Natural killer cell (primary cell): ENCODE measurements at regions of chrX and their contacts with region 1.

Region 1: GRCh38 chrX:48957827-48958634 is 624 bp upstream of the OTUD5 start:
- DNase-seq: peak; percentile 88 to 97
- ATAC-seq: peak; percentile 75 to 88 (median 79)
- H3K4me3 ChIP-seq: peak overlapping the region; percentile 57
- H3K4me3 Mint-ChIP-seq: peak overlapping the region; percentile 96
- H3K27ac ChIP-seq: peak overlapping the region; percentile 98
- H3K27ac Mint-ChIP-seq: peak overlapping the region; percentile 100
- H3K4me1 ChIP-seq: peaks cover 42% of the 10 kb centered on the region
- H3K4me1 Mint-ChIP-seq: peaks cover 24 to 45% of the 10 kb centered on the region in 2 donors
- H3K27me3 ChIP-seq: no peaks in the 10 kb centered on the region
- H3K27me3 Mint-ChIP-seq: peaks cover 0 to 7% of the 10 kb centered on the region in 2 donors
- CTCF ChIP-seq: no peak

Region 2: GRCh38 chrX:47658684-47659515 is 1299.1 kb before region 1 on chrX and contains the start of gene UXT:
- intact Hi-C with region 1: loop called (anchors 5 kb)
- DNase-seq: peak; percentile 85 to 94
- ATAC-seq: peak; percentile 81 to 92 (median 82)
- H3K4me3 ChIP-seq: peak within 1 kb of the TSS; percentile 89
- H3K4me3 Mint-ChIP-seq: peak within 1 kb of the TSS; percentile 83
- H3K27ac ChIP-seq: peak within 1 kb of the TSS; percentile 99
- H3K27ac Mint-ChIP-seq: peak within 1 kb of the TSS; percentile 93
- H3K4me1 ChIP-seq: peaks cover 8% of the 10 kb centered on the region
- H3K4me1 Mint-ChIP-seq: peaks cover 0 to 8% of the 10 kb centered on the region in 2 donors
- H3K27me3 ChIP-seq: no peaks in the 10 kb centered on the region
- H3K27me3 Mint-ChIP-seq: peaks cover 0 to 5% of the 10 kb centered on the region in 2 donors
- CTCF ChIP-seq: no peak
- total RNA-seq, gene UXT: 88.2 to 102 (median 95.4) TPM

Region 3: GRCh38 chrX:48897621-48898306 is 60.3 kb before region 1 on chrX and contains the starts of genes PQBP1 and TIMM17B:
- intact Hi-C with region 1: loop called (anchors 5 kb)
- DNase-seq: peak; percentile 79 to 95
- ATAC-seq: peak; percentile 85 to 96 (median 87)
- H3K4me3 ChIP-seq: peak within 1 kb of the TSS; percentile 99
- H3K4me3 Mint-ChIP-seq: peak within 1 kb of the TSS; percentile 90
- H3K27ac ChIP-seq: peak within 1 kb of the TSS; percentile 100
- H3K27ac Mint-ChIP-seq: peak within 1 kb of the TSS; percentile 92 to 97
- H3K4me1 ChIP-seq: peaks cover 27% of the 10 kb centered on the region
- H3K4me1 Mint-ChIP-seq: peaks cover 6 to 23% of the 10 kb centered on the region in 2 donors
- H3K27me3 ChIP-seq: no peaks in the 10 kb centered on the region
- H3K27me3 Mint-ChIP-seq: no peaks in the 10 kb centered on the region
- CTCF ChIP-seq: no peak
- total RNA-seq, gene PQBP1: 57.2 to 62.0 (median 59.1) TPM
- total RNA-seq, gene TIMM17B: 40.3 to 45.6 (median 44.5) TPM

Region 4: DNA sequence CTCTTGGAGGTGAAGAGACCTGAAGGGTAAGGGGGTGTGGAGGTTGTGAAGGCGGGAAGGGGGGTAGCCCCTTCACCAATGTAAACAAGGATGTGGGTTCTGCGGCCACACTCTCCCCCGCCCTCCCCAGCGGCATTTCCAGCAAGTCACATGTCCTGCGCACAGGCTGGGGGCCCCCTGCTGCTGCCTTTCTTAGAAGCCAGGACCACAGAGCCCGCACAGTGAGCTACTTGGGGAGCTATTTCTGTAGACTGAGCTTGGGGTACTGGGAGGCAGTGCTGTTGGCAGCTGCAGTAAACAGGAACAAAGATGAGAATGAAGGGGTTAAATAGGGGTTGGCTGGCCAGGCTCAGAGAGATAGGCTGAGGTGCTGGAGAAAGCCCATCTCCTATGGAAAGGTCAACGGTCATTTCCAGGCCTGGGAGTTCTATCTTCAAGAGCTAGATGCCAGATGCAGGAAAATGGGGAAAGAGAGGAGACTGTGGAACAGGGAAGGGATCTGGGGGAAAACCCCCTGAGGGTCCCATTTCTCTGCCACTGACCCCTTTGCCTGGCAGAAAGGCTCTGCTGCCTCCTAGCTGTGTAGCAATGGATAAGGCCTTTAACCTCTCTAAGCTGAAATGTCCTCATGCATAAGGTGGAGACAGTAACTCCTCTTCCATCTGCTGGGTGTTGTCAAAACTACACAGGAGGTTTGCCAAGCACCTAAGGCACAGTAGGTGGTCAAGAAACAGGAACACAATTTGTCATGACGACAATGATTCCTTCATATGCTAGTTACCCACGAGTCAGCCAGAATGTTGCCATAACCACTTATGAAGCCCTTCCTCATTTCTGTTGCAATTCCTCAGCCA is 20.8 kb before region 1 on chrX:
- intact Hi-C with region 1: loop called (anchors 2 kb)
- DNase-seq: peak; percentile 78 to 92
- ATAC-seq: peak; percentile 72 to 89 (median 86)
- H3K4me3 ChIP-seq: peak overlapping the region; percentile 19
- H3K4me3 Mint-ChIP-seq: peak overlapping the region; percentile 82
- H3K27ac ChIP-seq: peak overlapping the region; percentile 99
- H3K27ac Mint-ChIP-seq: peak overlapping the region; percentile 95 to 97
- H3K4me1 ChIP-seq: peaks cover 85% of the 10 kb centered on the region
- H3K4me1 Mint-ChIP-seq: peaks cover 60 to 79% of the 10 kb centered on the region in 2 donors
- H3K27me3 ChIP-seq: no peaks in the 10 kb centered on the region
- H3K27me3 Mint-ChIP-seq: peaks cover 0 to 6% of the 10 kb centered on the region in 2 donors
- CTCF ChIP-seq: peak; percentile 33

Region 5: DNA sequence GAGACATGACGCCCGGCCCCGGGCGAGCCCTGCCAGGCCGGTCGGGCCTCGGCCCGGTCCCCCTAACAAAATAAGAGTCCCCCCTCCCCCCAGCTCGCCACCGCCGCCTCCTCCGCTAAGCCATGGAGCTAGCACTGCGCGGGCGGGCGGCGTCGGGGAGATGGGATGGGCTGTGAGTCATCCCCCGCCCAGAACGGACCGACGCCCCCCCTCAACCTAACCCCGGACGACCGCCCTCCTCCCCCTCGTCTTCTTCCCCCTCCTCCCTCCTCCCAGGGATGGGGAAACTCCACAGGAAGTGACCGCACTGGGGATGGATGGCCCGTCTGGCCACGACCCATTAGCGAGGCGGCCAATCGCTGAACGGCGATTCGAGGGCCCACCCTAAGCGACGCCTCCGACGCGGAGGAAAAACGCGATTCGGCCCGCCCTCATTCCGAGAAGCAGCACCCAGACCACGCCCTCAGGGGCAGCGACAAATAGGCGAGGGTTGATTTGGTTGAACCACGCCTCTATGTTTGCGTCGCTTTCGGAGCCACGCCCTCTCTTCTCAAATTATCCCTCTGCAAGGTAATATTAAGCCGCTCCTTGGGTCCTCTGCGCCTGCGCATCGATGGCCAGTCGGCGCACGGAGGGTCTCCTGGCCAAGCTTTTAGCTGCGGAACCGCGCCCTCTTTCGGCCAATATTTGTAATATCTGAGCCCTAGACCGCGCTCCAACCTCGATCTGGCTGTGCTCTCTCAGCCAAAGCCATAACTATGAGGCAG is 85.4 kb after region 1 on chrX and contains the start of gene TFE3:
- intact Hi-C with region 1: loop called (anchors 1 kb)
- DNase-seq: peak; percentile 90 to 97
- ATAC-seq: peak; percentile 86 to 95 (median 86)
- H3K4me3 ChIP-seq: peak within 1 kb of the TSS; percentile 66
- H3K4me3 Mint-ChIP-seq: peak within 1 kb of the TSS; percentile 86
- H3K27ac ChIP-seq: peak within 1 kb of the TSS; percentile 94
- H3K27ac Mint-ChIP-seq: peak within 1 kb of the TSS; percentile 89 to 92
- H3K4me1 ChIP-seq: peaks cover 33% of the 10 kb centered on the region
- H3K4me1 Mint-ChIP-seq: peaks cover 23 to 33% of the 10 kb centered on the region in 2 donors
- H3K27me3 ChIP-seq: no peaks in the 10 kb centered on the region
- H3K27me3 Mint-ChIP-seq: no peaks in the 10 kb centered on the region
- CTCF ChIP-seq: peak; percentile 30
- total RNA-seq, gene TFE3: 43.8 to 57.5 (median 43.9) TPM

Region 6: GRCh38 chrX:49096419-49096818 is 138.4 kb after region 1 on chrX:
- intact Hi-C with region 1: no loop called
- DNase-seq: no peak
- ATAC-seq: no peak
- H3K4me3 ChIP-seq: no peak overlapping the region
- H3K4me3 Mint-ChIP-seq: no peak overlapping the region
- H3K27ac ChIP-seq: no peak overlapping the region
- H3K27ac Mint-ChIP-seq: no peak overlapping the region
- H3K4me1 ChIP-seq: peaks cover 13% of the 10 kb centered on the region
- H3K4me1 Mint-ChIP-seq: peaks cover 0 to 5% of the 10 kb centered on the region in 2 donors
- H3K27me3 ChIP-seq: no peaks in the 10 kb centered on the region
- H3K27me3 Mint-ChIP-seq: no peaks in the 10 kb centered on the region
- CTCF ChIP-seq: no peak